Pancreas (tissue), 10 donors: ENCODE measurements at regions of chr10 and their contacts with region 1.

Region 1: GRCh38 chr10:48656241-48656913 is 28.3 kb upstream of the WDFY4 start:
- DNase-seq: peak; percentile 87 to 99 (median 95)
- ATAC-seq: peak; percentile 92 to 95 (median 94)
- H3K4me3 ChIP-seq: peak overlapping the region; percentile 44 to 72 (median 62)
- H3K27ac ChIP-seq: peak overlapping the region in 2 of 4 donors; percentile 83 to 91
- H3K4me1 ChIP-seq: no peaks in the 10 kb centered on the region
- H3K27me3 ChIP-seq: no peaks in the 10 kb centered on the region
- CTCF ChIP-seq: peak; percentile 97 to 99 (median 98)

Region 2: DNA sequence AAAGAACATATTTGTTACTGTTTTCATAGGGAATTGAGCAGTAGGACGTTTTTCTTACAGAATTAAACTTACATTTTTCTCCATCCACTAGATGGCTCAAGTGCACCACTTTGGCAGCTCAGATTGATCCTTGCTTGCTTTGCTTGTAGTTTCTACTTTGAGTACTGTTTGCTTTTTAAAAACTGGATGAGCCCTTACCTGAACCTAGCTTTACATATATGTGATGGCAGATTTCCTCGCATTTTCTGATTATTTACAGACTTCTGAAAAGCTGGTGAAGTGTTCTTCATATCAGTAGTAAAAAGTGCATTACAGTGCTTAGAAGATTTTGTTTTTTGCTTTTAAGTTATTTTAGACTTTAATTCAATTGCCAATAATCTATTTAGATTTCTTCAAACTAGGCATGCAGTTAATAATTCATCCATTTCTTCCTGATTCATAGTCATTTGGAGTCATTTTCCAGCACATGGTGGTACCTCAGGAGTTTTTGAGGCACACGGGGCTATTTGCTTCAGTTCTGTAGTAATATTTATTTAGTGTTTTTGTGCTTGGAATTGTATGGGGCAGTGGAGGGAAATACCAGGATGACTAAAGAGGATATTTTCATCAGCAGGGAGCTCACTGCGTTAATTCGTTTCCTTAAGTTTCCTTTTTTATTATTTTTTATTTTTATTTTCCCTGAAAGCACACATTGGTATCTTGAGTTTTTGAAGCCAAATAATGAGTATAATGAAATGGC is 292.6 kb before region 1 on chr10:
- intact Hi-C with region 1: loop called in 2 of 3 experiments (anchors 10 kb)
- DNase-seq: peak in 3 of 6 donors; percentile 15 to 38 (median 28)
- ATAC-seq: peak; percentile 89 to 96 (median 94)
- H3K4me3 ChIP-seq: no peak overlapping the region
- H3K27ac ChIP-seq: peak overlapping the region in 1 of 4 donors; percentile 23
- H3K4me1 ChIP-seq: peaks cover 0 to 21% (median 18%) of the 10 kb centered on the region in 3 donors
- H3K27me3 ChIP-seq: no peaks in the 10 kb centered on the region
- CTCF ChIP-seq: peak; percentile 16 to 49 (median 34)

Region 3: DNA sequence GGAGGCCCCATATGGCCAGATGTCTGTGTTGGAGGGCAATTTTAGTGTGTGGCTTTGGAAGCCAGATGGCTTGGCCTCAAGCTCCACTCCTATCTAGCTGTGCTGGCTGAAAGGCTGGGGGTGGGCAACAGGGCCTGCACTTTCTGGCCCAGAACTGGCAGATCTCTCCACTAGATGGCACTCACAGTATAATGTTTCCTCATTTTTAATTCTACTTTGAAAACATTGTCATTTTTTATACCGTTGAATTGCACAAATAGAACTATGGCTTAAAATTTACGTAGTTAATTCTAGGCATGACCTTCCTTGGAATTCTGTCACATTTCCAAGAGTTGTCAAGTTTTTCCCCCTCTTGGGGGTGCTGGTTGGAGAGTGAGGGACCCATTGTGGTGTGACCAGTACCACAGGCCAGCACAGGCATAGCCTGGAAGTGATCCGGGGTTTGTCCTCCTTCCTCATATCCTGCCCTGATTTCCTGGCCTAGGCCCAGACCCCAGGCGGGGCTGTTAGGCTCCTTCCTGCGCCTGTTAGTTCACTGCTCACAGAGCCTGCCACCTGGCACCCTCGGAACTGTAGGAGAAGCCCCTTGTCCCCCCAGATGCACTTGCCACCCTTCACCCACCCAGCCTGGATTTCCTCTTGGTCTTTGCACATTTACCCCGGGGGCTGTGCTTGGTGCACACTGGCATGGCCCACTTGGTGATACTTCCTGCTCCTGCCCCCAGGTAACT is 104.4 kb before region 1 on chr10:
- intact Hi-C with region 1: loop called in 2 of 3 experiments (anchors 5 to 10 kb)
- DNase-seq: no peak
- ATAC-seq: peak in 3 of 4 donors; percentile 68 to 83 (median 80)
- H3K4me3 ChIP-seq: no peak overlapping the region
- H3K27ac ChIP-seq: no peak overlapping the region
- H3K4me1 ChIP-seq: no peaks in the 10 kb centered on the region
- H3K27me3 ChIP-seq: no peaks in the 10 kb centered on the region
- CTCF ChIP-seq: peak in 3 of 4 donors; percentile 30 to 58 (median 51)

Region 4: GRCh38 chr10:48594371-48594770 is 62.0 kb before region 1 on chr10:
- intact Hi-C with region 1: no loop called
- DNase-seq: no peak
- ATAC-seq: no peak
- H3K4me3 ChIP-seq: no peak overlapping the region
- H3K27ac ChIP-seq: no peak overlapping the region
- H3K4me1 ChIP-seq: no peaks in the 10 kb centered on the region
- H3K27me3 ChIP-seq: no peaks in the 10 kb centered on the region
- CTCF ChIP-seq: no peak

Region 5: DNA sequence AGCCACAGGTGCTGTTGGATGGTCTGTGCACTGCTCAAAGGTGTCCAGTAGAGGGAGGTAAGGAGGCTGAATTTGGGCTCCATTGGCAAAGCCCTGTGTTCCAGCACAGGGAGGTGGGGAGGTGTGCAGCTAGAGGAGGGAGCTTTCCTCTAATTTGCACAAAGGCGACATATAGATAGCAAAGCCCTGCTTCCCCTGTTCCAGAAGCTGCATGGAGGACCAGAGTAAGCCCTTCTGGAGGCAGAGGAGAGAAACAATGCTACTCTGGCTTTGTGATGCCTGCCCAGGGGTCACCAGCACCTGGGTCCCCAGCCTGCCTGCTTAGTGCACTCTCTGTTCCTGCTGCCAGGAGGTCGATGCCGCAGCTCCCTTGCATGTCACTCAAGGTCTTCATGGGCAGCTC is 48.1 kb before region 1 on chr10:
- intact Hi-C with region 1: loop called in 1 of 3 experiments (anchors 10 kb)
- DNase-seq: peak in 2 of 6 donors; percentile 13 to 52
- ATAC-seq: peak; percentile 68 to 82 (median 76)
- H3K4me3 ChIP-seq: no peak overlapping the region
- H3K27ac ChIP-seq: no peak overlapping the region
- H3K4me1 ChIP-seq: peaks cover 0 to 3% (median 0%) of the 10 kb centered on the region in 3 donors
- H3K27me3 ChIP-seq: peaks cover 0 to 4% (median 2%) of the 10 kb centered on the region in 4 donors
- CTCF ChIP-seq: peak; percentile 38 to 54 (median 46)